ENCODE measurements at regions of chr3 and their contacts with region 1.

Region 1: GRCh38 chr3:179562591-179563270 is at the start of gene ACTL6A:
- DNase-seq: peak; percentile 98
- ATAC-seq: peak; percentile 97
- H3K4me3 ChIP-seq: peak within 1 kb of the TSS; percentile 87 to 97 (median 91)
- H3K27ac ChIP-seq: peak within 1 kb of the TSS; percentile 94
- H3K4me1 ChIP-seq: peaks cover 23% of the 10 kb centered on the region
- H3K27me3 ChIP-seq: no peaks in the 10 kb centered on the region
- CTCF ChIP-seq: no peak
- EP300 ChIP-seq: no peak
- POLR2A ChIP-seq: peak; percentile 89
- RAD21 ChIP-seq: 0 out of 2 replicates have a peak, but pooled peaks have one; percentile 16
- total RNA-seq, gene ACTL6A: 84.1 and 116 TPM in 2 replicates

Region 2: DNA sequence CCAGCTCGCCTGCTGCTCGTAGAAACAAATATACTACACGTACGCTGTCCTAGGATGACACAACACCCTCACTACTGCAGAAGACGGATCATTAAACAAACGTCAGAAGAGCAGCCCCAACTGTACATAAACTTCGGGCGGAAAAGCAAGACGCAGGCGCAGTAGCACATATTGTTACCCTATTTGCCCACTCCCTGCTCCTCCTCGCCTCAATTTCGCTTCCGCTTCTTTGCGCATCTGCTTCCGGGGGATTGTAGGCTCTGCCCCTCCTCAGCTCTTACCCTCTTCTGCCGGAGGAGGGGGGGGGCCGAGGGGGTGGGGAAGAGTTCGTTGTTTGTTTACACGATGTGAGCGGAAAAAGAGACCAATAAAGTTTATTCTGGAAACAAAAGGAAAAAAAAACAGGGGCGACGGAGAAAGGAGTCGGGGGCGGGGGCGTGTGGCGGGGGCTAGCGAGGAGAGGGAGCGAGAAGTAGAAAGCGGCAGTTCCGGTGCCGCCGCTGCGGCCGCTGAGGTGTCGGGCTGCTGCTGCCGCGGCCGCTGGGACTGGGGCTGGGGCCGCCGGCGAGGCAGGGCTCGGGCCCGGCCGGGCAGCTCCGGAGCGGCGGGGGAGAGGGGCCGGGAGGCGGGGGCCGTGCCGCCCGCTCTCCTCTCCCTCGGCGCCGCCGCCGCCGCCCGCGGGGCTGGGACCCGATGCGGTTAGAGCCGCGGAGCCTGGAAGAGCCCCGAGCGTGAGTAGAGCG is 414.7 kb before region 1 on chr3 and contains the start of gene PIK3CA:
- CTCF ChIA-PET with region 1: no interaction called
- POLR2A ChIA-PET with region 1: interaction called, 7 read pairs
- in situ Hi-C with region 1: loop called (anchors 25 kb)
- intact Hi-C with region 1: loop called (anchors 2 kb)
- DNase-seq: peak; percentile 97
- ATAC-seq: peak; percentile 91
- H3K4me3 ChIP-seq: peak within 1 kb of the TSS; percentile 92 to 100 (median 98)
- H3K27ac ChIP-seq: peak within 1 kb of the TSS; percentile 87
- H3K4me1 ChIP-seq: peaks cover 22% of the 10 kb centered on the region
- H3K27me3 ChIP-seq: no peaks in the 10 kb centered on the region; a peak in 1 of 5 replicates
- CTCF ChIP-seq: no peak
- EP300 ChIP-seq: peak in 1 of 2 experiments; percentile 21; a peak in 1 of 4 replicates
- POLR2A ChIP-seq: peak; percentile 27 to 49; a peak in 2 of 4 replicates
- RAD21 ChIP-seq: peak; percentile 22; the same call in 1 of the 2 replicates
- total RNA-seq, gene PIK3CA: 11.4 and 20.4 TPM in 2 replicates

Region 3: DNA sequence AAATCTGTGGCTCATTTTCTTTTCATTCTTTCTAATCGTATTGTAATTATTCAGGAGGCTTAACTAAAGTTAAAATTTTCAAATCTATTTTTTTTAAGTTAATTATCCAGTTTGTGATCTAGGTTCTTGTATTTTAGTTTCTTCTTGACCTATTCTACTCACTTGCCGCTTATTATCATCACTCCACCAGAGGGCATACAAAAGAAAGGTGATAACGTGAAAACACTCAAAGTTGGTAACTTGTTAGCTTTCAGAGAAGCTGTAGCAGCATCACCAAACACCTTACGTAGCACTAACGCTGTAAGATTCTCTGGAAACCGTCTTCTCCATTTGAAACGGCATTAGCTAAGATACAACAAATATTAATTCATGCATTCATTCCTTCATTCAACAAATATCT is 116.2 kb before region 1 on chr3:
- CTCF ChIA-PET with region 1: interaction called, 9 read pairs
- POLR2A ChIA-PET with region 1: no interaction called
- in situ Hi-C with region 1: loop called (anchors 5 kb)
- intact Hi-C with region 1: loop called (anchors 1 kb)
- DNase-seq: peak; percentile 27
- ATAC-seq: peak; percentile 64
- H3K4me3 ChIP-seq: no peak overlapping the region
- H3K27ac ChIP-seq: no peak overlapping the region
- H3K4me1 ChIP-seq: no peaks in the 10 kb centered on the region
- H3K27me3 ChIP-seq: peaks cover 2 to 4% of the 10 kb centered on the region in 2 experiments; a peak in 1 of 5 replicates
- CTCF ChIP-seq: peak; percentile 36
- EP300 ChIP-seq: no peak
- POLR2A ChIP-seq: no peak
- RAD21 ChIP-seq: 0 out of 2 replicates have a peak, but pooled peaks have one; percentile 23

Region 4: DNA sequence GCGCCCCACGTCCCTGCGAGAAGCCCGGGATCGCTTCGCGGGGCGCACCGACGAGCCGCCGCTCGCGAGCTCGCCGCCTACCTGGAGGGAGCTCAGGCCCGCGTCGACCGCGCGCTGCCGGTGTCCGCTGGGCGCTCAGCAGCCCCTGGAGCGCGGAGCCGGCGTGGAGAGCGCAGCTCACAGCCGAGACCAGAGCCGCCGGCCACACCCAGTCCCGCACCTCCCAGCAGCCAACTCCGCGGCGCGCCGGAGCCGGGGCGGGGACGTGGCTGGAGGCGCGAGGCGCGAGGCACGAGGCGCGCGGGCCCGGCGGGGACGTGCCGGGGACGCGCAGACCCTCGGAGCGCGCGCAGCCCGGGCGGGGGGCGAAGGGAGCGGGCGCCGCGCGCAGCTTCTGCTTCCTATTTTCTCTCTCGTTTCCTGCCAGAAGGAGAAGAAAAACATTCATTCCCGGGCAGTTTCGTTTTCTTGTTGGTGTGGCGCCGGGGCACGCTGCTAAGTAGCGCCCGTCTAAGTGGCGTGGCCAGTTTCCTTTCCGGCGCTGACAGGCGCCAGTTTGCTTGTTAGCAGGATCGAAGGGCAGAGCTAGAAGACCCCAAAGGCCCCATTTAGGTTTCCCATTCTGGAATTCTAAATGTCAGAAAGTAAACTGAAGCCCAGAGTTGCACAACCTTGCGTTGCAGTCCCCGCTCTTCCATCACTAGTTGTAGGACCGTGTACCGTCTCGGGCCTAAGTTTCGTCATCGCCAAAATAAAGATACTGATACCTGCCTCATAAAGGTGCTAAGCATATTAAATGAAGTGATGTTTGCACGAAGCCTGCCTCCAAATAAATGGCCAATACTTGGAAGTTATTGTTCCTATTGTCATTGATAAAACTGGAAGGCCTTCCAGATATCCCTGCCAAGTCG is 111.2 kb before region 1 on chr3 and contains the start of gene GNB4:
- CTCF ChIA-PET with region 1: interaction called, 9 read pairs
- POLR2A ChIA-PET with region 1: no interaction called
- in situ Hi-C with region 1: loop called (anchors 5 kb)
- intact Hi-C with region 1: loop called (anchors 1 kb)
- DNase-seq: no peak
- ATAC-seq: peak; percentile 76
- H3K4me3 ChIP-seq: peak within 1 kb of the TSS; percentile 44 to 67 (median 45)
- H3K27ac ChIP-seq: no peak within 1 kb of the TSS
- H3K4me1 ChIP-seq: peaks cover 17% of the 10 kb centered on the region
- H3K27me3 ChIP-seq: peaks cover 0 to 28% of the 10 kb centered on the region in 2 experiments; a peak in 3 of 5 replicates
- CTCF ChIP-seq: no peak
- EP300 ChIP-seq: no peak
- POLR2A ChIP-seq: no peak
- RAD21 ChIP-seq: no peak
- total RNA-seq, gene GNB4: 0.13 and 0.36 TPM in 2 replicates

Region 5: GRCh38 chr3:179604321-179605078 is 41.8 kb after region 1 on chr3 and contains the starts of genes MRPL47 and NDUFB5:
- CTCF ChIA-PET with region 1: no interaction called
- POLR2A ChIA-PET with region 1: interaction called, 19 read pairs
- in situ Hi-C with region 1: no loop called
- intact Hi-C with region 1: loop called (anchors 2 kb)
- DNase-seq: peak; percentile 95
- ATAC-seq: peak; percentile 100
- H3K4me3 ChIP-seq: peak within 1 kb of the TSS; percentile 90 to 95 (median 91)
- H3K27ac ChIP-seq: peak within 1 kb of the TSS; percentile 86
- H3K4me1 ChIP-seq: peaks cover 18% of the 10 kb centered on the region
- H3K27me3 ChIP-seq: no peaks in the 10 kb centered on the region; a peak in 1 of 5 replicates
- CTCF ChIP-seq: no peak
- EP300 ChIP-seq: no peak
- POLR2A ChIP-seq: peak; percentile 82 to 89
- RAD21 ChIP-seq: no peak
- total RNA-seq, gene MRPL47: 83.8 and 120 TPM in 2 replicates
- total RNA-seq, gene NDUFB5: 120 and 154 TPM in 2 replicates